Posterior cingulate gyrus (tissue), 11 donors: ENCODE measurements at regions of chr3 and their contacts with region 1.

Region 1: DNA sequence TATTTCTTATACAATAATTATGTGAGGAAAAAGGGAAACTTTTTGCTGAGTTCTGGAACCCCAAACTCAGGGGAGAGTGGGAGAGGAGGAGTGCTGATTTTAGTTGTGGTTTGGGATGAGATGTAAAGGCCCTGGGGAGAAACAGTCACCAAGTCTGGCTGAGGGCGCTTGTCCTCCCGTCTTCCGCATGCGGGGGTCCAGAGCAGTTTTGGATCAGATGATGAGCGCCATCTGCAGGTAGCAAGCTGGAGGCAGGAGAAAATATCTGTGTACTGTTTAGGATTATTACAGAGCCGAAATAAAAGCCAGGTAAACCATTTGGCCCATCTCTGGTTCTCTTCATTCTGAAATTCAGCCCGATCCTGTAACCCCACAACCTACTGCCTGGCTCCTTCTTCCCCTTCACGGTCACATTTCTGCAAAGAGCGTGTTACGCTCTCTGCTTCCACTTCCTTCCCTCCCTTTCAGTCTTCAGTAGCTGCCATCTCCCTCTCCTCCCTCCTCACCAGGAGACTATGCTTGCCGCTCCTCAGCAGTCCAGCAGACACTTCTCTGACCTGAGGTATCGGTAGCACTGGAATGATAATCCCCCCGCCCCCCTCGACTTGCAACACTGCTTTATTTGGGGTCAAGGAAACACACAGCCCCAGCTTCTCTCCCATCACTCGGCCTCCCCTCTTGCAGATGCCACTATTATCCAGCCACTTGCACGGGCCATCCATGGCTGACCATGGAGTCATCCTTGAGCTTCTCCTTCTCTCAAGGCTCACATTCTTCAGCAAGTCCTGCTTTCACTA is 1.4 kb upstream of the PARP14 start:
- DNase-seq: peak; percentile 47 to 94 (median 69)

Region 2: GRCh38 chr3:121545574-121546455 is 1133.5 kb before region 1 on chr3 and contains the start of gene POLQ:
- intact Hi-C with region 1: loop called (anchors 2 kb)
- DNase-seq: peak; percentile 89 to 99 (median 94)

Region 3: GRCh38 chr3:122392868-122393844 is 286.1 kb before region 1 on chr3:
- intact Hi-C with region 1: loop called (anchors 1 kb)
- DNase-seq: no peak

Region 4: GRCh38 chr3:122427857-122428471 is 251.3 kb before region 1 on chr3:
- intact Hi-C with region 1: no loop called
- DNase-seq: no peak

Region 5: DNA sequence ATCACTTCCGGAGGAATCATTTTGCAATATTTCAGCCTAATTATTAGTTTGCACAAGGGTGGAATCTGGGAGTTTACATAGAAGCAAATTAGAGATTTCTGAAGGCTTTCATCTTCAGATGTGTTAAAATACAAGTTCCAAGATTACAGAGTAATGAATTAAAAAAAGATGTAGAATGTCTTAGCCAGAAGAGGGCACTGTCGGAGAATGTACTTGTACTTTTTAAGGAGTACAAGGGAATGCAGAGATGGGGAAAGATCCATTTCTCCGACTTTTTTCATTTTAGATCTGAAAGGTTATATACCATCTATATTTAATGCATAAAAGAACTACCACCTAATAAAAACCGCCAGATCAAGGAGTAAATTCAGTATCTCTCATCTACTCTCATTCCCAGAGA is 220.3 kb before region 1 on chr3:
- intact Hi-C with region 1: loop called (anchors 1 kb)
- DNase-seq: no peak

Region 6: DNA sequence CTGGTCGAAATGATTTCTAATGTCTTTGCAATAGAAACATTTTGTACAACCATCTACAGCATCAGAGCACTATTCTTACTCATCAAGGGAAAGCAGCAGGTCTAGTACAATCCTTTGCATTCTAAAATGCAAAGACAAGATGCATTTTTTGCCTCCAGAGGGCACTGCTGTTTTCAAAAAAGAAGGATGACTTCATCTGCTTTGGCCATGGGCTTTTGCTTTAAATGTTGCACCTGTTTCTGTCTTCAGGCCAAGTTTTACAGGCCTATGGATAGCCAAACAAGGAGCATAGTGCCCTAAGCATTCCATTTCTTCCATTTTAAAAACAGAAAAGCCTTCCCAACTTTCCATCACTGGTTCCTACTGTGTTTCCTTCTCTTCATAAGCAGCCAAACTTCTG is 118.6 kb before region 1 on chr3:
- intact Hi-C with region 1: loop called (anchors 2 kb)
- DNase-seq: no peak

Region 7: GRCh38 chr3:122572940-122573412 is 106.3 kb before region 1 on chr3:
- intact Hi-C with region 1: no loop called
- DNase-seq: no peak

Region 8: GRCh38 chr3:122835590-122835989 is 156.3 kb after region 1 on chr3:
- intact Hi-C with region 1: no loop called
- DNase-seq: no peak